Naive thymus-derived CD4-positive, alpha-beta T cell (primary cell): ENCODE measurements at regions of chr5 and their contacts with region 1.

Region 1: GRCh38 chr5:80481019-80481893 is 6.6 kb upstream of the FAM151B start:
- DNase-seq: peak in 5 of 9 donors; percentile 18 to 41 (median 30)
- ATAC-seq: peak; percentile 85
- H3K4me3 ChIP-seq: no peak overlapping the region
- H3K4me3 Mint-ChIP-seq: no peak overlapping the region
- H3K27ac ChIP-seq: no peak overlapping the region
- H3K27ac Mint-ChIP-seq: peak overlapping the region in 1 of 9 donors; percentile 47
- H3K4me1 ChIP-seq: no peaks in the 10 kb centered on the region
- H3K4me1 Mint-ChIP-seq: peaks cover 0 to 7% (median 0%) of the 10 kb centered on the region in 7 donors
- H3K27me3 ChIP-seq: no peaks in the 10 kb centered on the region
- H3K27me3 Mint-ChIP-seq: peaks cover 0 to 3% (median 0%) of the 10 kb centered on the region in 5 donors

Region 2: DNA sequence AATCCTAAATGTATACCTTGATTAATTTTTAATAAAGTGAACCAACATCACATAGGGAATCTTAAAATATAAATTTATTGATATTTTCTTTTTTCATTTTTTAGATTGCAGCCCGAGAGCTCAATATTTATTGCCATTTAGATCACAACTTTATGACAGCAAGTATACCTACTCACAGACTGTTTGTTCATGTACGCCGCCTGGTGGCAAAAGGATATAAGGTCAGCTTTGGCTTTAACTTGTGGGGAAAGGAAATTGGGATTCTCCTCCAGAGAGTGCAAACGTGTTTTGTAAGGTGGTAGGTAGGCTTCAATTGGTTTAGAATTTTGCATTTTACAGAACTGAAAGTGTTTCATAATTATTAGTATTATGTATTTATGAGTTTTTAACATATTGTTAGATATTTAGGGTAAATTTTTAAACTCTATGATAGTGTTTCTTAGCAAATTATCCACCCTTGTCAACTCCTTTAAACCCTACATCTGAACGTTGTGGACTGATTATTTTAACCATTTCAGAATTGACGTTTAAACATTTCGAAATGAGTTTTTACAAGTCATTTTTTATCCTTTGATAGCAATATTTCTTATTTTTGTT is 191.0 kb after region 1 on chr5:
- CTCF ChIA-PET with region 1: interaction called, 6 read pairs
- POLR2A ChIA-PET with region 1: no interaction called
- intact Hi-C with region 1: loop called (anchors 1 to 2 kb)
- DNase-seq: peak; percentile 26 to 62 (median 48)
- ATAC-seq: peak; percentile 85
- H3K4me3 ChIP-seq: no peak overlapping the region
- H3K4me3 Mint-ChIP-seq: no peak overlapping the region
- H3K27ac ChIP-seq: no peak overlapping the region
- H3K27ac Mint-ChIP-seq: no peak overlapping the region
- H3K4me1 ChIP-seq: no peaks in the 10 kb centered on the region
- H3K4me1 Mint-ChIP-seq: peaks cover 0 to 19% (median 4%) of the 10 kb centered on the region in 7 donors
- H3K27me3 ChIP-seq: no peaks in the 10 kb centered on the region
- H3K27me3 Mint-ChIP-seq: no peaks in the 10 kb centered on the region